Esophagus squamous epithelium (tissue), 5 donors: ENCODE measurements at regions of chr2 and their contacts with region 1.

Region 1: DNA sequence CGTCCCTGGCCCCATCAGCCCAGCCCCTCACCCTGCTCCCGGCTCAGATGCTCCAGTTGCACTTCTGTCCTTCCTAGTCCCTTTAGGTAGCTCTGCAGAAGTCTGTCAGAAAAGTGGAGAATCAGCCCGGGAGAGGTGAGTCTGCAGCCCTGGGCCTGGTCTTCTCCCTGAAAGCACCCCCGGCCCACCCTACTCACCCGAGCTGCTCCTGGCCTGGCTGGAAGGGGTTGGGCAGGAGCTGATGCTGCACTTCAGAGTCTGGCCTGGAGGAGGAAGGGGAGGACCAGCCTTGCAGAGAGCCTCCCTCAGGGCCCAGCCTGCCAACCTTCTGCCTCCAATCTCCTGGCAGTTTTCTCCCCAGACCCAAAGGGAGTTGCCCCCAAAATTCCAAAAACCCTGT is 15.8 kb downstream of the KHK start:
- DNase-seq: no peak
- H3K4me3 ChIP-seq: no peak overlapping the region
- H3K27ac ChIP-seq: no peak overlapping the region
- H3K4me1 ChIP-seq: no peaks in the 10 kb centered on the region
- H3K27me3 ChIP-seq: peaks cover 0 to 16% (median 0%) of the 10 kb centered on the region in 4 donors
- CTCF ChIP-seq: no peak
- POLR2A ChIP-seq: no peak

Region 2: DNA sequence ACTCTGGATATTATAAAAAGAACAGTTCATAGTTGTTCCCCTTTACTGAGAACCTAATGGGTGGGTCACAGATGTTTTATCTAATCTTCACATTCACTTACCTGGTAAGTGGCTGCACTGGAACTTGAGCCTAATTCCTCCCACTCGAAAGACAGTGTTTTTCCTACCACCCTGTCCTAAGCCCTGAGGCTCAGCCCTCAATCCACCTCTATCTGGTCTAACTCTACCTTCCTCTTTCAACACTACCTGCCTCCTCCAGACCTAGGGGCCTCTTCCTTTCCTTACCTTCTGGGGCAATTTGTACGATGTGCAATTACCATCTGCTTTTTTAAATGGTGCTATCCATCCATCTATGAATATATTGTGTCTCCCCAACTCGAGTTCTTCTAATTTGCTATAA is 1110.4 kb before region 1 on chr2:
- intact Hi-C with region 1: no loop called
- DNase-seq: no peak
- H3K4me3 ChIP-seq: peak overlapping the region in 1 of 4 donors; percentile 57
- H3K27ac ChIP-seq: peak overlapping the region; percentile 33 to 70 (median 56)
- H3K4me1 ChIP-seq: peaks cover 0 to 20% (median 5%) of the 10 kb centered on the region in 3 donors
- H3K27me3 ChIP-seq: no peaks in the 10 kb centered on the region
- CTCF ChIP-seq: no peak
- POLR2A ChIP-seq: no peak

Region 3: DNA sequence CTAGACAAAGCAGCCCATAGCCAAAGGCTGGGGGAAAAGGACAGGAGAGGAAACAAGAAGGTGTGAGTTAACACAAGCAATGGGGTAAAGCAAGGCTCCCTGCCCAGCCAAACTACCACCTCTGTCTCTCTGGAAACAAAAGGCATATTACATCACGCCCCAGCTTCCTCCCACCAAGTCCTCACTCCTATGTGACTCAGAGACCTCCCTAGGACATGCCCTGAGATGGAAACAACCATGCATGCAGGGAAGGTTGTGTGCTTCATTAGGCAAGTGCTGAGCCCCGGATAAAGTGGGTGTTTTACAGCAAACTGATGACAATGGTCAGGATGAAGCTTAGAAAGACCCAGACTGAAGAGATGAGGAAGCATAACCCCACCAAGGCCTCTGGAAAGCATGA is 100.5 kb after region 1 on chr2:
- intact Hi-C with region 1: loop called (anchors 5 kb)
- DNase-seq: no peak
- H3K4me3 ChIP-seq: no peak overlapping the region
- H3K27ac ChIP-seq: no peak overlapping the region
- H3K4me1 ChIP-seq: no peaks in the 10 kb centered on the region
- H3K27me3 ChIP-seq: no peaks in the 10 kb centered on the region
- CTCF ChIP-seq: no peak
- POLR2A ChIP-seq: no peak

Region 4: DNA sequence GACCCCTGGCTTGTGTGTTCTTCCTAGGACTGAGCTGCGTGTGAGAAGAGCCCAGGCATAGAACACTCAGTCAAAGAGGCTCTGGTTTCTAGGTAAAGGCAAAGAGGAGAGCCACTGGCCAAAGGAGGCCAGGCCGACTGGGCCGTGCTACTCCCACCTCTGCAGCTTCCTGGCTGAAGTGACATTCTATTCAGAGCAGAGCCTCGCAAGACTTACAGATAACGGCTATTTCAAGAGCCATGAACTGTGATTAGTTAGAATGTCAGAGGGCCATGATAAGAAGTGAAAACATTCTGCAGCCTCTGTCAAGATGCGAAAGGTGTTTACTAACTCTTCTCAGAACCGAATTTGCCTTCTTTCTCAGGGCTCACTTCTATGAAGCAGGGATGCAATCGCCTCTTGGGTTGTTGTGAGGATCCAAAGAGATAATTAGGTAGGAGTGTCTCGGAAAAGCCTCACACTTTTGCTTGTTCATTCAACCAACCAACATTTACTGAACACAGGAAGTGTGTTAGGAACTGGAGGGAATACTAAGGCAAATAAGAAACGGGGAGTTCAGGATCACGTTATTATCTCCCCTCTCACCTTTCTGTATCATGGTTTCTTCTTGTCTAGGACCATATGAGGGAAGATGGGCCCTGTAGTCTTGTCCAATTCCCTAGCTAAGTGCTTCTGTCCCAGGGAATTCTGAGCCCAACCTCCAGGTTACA is 169.5 kb after region 1 on chr2:
- intact Hi-C with region 1: loop called (anchors 10 kb)
- DNase-seq: no peak
- H3K4me3 ChIP-seq: no peak overlapping the region
- H3K27ac ChIP-seq: no peak overlapping the region
- H3K4me1 ChIP-seq: no peaks in the 10 kb centered on the region
- H3K27me3 ChIP-seq: peaks cover 0 to 86% (median 0%) of the 10 kb centered on the region in 4 donors
- CTCF ChIP-seq: no peak
- POLR2A ChIP-seq: no peak